ENCODE measurements at regions of chr19 and their contacts with region 1.

Region 1: DNA sequence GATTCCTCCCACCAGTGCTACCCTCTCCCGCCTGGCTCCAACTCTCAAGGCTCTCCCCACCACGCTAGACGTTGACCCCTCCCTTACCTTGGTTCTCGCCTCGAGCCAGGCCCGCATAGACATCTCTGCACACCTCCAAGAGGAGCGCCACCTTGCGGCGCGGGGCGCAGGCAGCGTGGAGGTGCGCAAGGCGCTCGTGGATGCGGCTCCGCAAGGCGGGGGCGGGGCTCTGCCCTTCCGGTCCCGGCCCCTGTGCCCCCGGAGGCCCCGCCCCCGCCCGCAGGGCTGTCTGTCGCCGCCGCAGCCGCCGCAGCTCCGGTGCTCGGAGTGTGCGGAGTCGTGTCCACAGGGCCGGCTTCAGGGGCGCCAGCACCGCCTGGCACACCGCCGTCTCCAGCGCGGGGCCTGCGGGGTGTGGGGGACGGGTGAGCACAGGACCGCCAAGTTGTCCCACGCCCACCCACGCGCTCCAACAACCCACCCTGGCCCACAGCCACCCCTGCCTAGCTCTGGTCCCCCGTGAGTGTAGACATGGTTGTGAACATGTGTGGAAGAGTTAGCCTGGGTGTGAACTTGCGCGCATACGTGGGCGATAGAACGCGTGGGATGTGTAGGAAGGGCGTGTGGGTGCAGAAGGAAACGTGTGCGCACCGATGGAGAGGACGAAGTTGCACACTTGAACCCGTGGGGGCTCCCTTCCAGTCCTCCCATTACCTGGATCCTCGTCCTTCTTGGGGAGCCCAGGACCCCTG is 8.0 kb downstream of the RINL start:
- DNase-seq: peak; percentile 94
- ATAC-seq: peak; percentile 87
- H3K4me3 Mint-ChIP-seq: peak overlapping the region; percentile 92
- H3K27ac Mint-ChIP-seq: peak overlapping the region; percentile 91
- H3K4me1 Mint-ChIP-seq: peaks cover 57% of the 10 kb centered on the region
- H3K27me3 Mint-ChIP-seq: no peaks in the 10 kb centered on the region
- CTCF ChIP-seq: no peak

Region 2: DNA sequence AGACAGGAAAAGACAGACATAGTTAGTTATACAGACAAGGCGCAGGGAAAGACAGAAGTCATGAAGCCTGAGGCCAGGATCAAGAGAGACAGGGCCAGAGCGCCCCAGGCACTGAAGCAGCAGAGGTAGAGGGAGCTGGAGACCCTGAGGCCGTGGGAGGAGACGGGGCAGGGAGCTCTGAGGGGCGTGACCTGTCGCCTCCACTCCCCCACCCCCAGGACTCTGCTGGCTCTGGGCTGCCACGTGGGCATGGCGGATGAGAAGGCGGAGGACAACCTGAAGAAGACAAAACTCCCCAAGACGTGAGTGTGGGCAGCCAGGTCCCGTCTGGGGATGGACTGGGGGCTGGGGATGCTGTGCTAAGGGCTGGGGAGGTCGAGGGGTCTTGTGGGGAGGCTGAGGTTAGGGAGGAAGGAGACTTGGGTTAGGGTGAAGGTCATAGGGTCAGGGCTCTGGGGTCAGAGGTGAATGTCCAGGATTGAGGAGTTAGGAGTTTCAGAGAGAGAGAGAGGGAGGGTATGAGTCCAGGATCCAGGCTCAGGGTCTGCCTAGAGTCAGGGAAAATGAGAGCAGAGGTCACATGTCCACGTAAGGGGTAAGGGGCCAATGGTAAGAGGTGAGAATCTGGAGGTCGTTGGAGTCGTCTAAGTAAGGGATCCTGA is 405.5 kb before region 1 on chr19:
- CTCF ChIA-PET with region 1: no interaction called
- POLR2A ChIA-PET with region 1: no interaction called
- intact Hi-C with region 1: no loop called
- DNase-seq: no peak
- ATAC-seq: no peak
- H3K4me3 Mint-ChIP-seq: no peak overlapping the region
- H3K27ac Mint-ChIP-seq: no peak overlapping the region
- H3K4me1 Mint-ChIP-seq: no peaks in the 10 kb centered on the region
- H3K27me3 Mint-ChIP-seq: peaks cover 22% of the 10 kb centered on the region
- CTCF ChIP-seq: no peak

Region 3: DNA sequence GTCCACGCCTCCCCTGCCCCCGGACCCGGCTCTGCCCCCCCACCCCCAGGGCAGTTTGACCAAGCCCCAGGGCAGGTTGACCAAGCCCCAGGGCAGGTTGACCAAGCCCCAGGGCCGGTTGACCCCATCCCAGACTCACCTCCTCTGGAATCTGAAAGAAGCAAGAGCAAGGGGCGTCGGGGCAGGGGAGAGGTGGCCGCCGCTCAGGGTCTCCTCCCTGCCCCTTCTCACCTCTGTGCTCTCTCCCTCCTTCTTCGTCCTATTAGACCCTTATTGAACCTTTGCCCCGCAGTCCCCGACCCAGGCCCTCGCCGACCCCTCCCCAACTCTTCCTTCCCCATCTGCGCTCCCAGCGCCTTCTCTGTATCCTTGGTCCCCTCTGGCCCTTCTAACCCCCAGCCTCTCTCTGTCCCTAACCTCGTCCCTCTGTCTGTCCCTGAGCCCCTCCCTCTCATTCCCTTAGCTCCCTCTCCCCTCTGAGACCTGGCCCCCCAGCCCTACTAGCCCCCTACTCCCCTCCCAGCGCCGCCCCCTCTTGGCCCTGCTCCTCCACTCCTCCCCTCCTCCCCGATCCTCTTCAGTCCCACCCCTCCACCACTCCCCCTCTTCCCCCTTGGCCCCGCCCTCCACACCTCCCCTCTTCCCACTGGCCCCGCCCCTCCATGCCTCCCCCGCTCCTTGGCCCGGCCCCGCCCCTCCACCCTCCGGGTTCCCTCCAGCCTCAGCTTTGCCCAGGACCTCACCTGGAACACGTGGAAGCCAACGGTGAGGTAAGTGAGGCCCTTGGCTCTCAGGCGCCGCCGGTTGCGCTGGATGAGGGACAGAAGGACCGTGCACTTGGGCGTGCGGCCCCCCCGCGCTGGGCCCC is 133.4 kb before region 1 on chr19:
- CTCF ChIA-PET with region 1: interaction called, 3 read pairs
- POLR2A ChIA-PET with region 1: no interaction called
- intact Hi-C with region 1: loop called (anchors 5 kb)
- DNase-seq: peak; percentile 64
- ATAC-seq: peak; percentile 60
- H3K4me3 Mint-ChIP-seq: peak overlapping the region; percentile 71
- H3K27ac Mint-ChIP-seq: peak overlapping the region; percentile 12
- H3K4me1 Mint-ChIP-seq: peaks cover 38% of the 10 kb centered on the region
- H3K27me3 Mint-ChIP-seq: no peaks in the 10 kb centered on the region
- CTCF ChIP-seq: no peak

Region 4: GRCh38 chr19:38838573-38839269 is 31.3 kb before region 1 on chr19:
- CTCF ChIA-PET with region 1: interaction called, 10 read pairs
- POLR2A ChIA-PET with region 1: interaction called, 18 read pairs
- intact Hi-C with region 1: no loop called
- DNase-seq: no peak
- ATAC-seq: no peak
- H3K4me3 Mint-ChIP-seq: no peak overlapping the region
- H3K27ac Mint-ChIP-seq: peak overlapping the region; percentile 50
- H3K4me1 Mint-ChIP-seq: peaks cover 26% of the 10 kb centered on the region
- H3K27me3 Mint-ChIP-seq: no peaks in the 10 kb centered on the region
- CTCF ChIP-seq: no peak

Region 5: DNA sequence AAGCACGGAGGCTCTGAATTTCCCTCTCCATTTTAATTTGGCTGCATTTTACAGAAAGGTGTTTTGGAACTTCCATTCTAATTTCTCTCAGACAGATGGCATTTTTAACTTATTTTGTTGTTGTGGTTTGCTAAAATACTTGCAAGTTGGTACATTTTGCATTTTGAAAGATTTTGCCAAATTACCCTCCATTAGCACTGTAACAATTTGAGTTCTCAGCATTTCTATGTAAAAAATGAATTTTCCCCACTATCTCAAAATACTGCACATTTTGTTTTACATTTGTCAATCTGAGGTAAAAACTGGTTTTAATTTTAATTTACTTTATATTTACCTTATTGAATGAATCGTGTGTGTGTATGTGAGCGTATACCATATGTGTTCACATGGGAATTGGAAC is 13.2 kb before region 1 on chr19:
- CTCF ChIA-PET with region 1: interaction called, 31 read pairs
- POLR2A ChIA-PET with region 1: interaction called, 463 read pairs
- intact Hi-C with region 1: no loop called
- DNase-seq: no peak
- ATAC-seq: no peak
- H3K4me3 Mint-ChIP-seq: peak overlapping the region; percentile 78
- H3K27ac Mint-ChIP-seq: peak overlapping the region; percentile 88
- H3K4me1 Mint-ChIP-seq: peaks cover 60% of the 10 kb centered on the region
- H3K27me3 Mint-ChIP-seq: no peaks in the 10 kb centered on the region
- CTCF ChIP-seq: no peak

Region 6: DNA sequence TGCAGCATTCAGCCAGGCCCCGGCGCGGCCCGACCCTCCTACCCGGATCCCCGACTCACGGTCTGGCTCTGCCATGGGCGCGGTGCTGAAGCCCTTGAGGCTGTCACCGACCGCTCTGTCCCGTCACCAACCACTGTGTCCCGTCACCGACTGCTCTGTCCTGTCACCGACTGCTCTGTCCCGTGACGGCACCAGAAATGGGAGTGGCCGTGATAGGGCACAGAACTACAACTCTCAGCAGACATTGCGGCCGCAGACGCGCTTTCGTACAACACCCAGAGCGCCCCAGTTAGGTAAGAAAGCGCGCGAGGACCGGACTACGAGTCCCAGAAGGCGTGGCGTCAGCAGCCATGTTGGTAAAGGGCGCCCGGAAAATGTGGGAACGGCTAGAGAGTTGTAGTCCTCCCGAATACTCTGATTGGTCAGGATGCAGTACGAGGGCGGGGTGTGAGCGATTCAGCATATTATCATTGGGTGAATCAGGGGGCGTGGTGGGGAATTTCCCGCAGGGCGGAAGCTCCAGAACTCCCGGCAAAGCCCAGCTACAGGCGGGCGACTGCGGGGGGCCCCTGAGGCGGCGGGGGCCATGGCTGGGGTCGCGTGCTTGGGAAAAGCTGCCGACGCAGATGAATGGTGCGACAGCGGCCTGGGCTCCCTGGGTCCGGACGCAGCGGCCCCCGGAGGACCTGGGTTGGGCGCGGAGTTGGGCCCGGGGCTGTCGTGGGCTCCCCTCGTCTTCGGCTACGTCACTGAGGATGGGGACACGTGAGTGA is 29.6 kb after region 1 on chr19 and contains the starts of genes NFKBIB and SIRT2:
- CTCF ChIA-PET with region 1: interaction called, 4 read pairs
- POLR2A ChIA-PET with region 1: interaction called, 8 read pairs
- intact Hi-C with region 1: loop called (anchors 1 kb)
- DNase-seq: peak; percentile 91
- ATAC-seq: peak; percentile 91
- H3K4me3 Mint-ChIP-seq: peak within 1 kb of the TSS; percentile 91
- H3K27ac Mint-ChIP-seq: peak within 1 kb of the TSS; percentile 87
- H3K4me1 Mint-ChIP-seq: peaks cover 41% of the 10 kb centered on the region
- H3K27me3 Mint-ChIP-seq: no peaks in the 10 kb centered on the region
- CTCF ChIP-seq: no peak
- total RNA-seq, gene NFKBIB: 45.5 and 49.5 TPM in 2 replicates
- total RNA-seq, gene SIRT2: 28.4 and 32.7 TPM in 2 replicates